Esophagus muscularis mucosa (tissue), 4 donors: ENCODE measurements at regions of chr9 and their contacts with region 1.

Region 1: DNA sequence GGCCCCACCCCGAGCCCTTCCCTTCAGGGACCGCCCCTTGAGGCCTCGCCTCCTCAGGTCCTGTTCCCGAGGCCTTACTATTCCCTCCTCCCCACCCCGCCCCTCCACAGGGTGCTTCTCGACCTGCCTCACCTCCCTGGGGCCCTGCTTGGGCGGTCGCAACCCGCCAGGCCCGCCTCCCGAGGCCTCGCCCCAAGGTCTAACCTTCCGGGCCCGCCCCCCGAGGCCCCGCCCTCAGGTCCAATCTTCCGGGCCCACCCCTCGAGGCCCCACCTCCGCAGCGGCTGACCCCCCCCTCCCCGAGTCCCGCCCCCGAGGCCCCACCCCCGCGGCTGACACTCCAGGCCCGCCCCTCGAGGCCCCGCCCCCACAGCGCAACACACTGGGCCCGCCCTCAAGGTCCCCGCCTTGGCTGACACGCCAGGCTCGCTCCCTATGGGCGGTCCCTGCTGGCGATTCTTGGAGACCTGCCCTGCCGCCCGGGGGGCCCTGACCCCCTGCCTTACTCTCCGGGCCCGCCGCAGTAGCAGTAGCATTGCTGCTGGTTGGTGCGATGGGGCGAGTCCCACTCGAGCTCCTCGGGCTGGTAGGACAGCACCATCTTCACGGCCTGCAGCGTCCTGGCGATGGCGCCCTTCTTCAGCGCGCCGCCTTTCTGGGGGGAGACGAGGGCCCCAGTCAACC is 8.2 kb downstream of the PHF19 start:
- DNase-seq: peak; percentile 99
- H3K4me3 ChIP-seq: peak overlapping the region; percentile 55 to 77 (median 64)
- H3K27ac ChIP-seq: peak overlapping the region; percentile 91 to 93 (median 92)
- H3K4me1 ChIP-seq: peaks cover 6 to 25% (median 21%) of the 10 kb centered on the region in 4 donors
- H3K27me3 ChIP-seq: no peaks in the 10 kb centered on the region
- CTCF ChIP-seq: peak; percentile 48 to 76 (median 65)
- EP300 ChIP-seq: no peak
- POLR2A ChIP-seq: no peak

Region 2: DNA sequence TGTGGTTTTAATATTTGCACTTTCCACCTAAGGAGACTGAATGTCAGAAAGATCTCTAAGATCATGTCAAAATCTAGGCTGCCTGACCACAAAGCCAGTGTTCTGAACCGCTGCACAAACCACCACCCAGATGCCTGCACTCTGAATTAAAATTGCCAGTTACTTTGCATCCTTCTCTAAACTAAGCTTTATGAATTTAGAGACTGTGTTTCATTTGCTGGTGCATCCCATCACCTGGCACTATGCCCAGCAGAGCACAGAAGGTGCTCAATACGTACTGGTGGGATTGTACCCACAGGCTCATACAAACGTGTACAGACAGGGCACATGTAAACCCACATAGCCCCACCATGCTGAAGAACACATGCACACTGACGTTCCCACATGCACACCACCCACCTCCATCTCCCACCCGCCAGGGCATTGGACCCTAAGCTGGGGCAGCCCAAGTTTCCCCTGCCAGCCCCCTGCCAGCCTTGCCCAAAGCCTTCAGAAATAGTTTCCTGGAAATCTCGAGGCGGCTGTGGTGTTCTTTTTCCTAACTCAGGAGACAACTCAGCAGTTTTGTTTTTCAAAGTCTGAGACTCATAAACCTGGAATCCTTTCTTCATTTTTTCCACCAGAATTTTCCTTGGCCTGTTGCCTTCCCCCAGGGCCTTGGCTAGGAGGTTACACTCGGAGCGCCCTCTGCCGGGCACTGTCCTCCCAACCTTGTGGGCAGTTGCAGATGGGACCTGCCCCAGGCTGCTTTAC is 67.4 kb after region 1 on chr9:
- intact Hi-C with region 1: loop called (anchors 2 kb)
- DNase-seq: peak; percentile 99
- H3K4me3 ChIP-seq: peak overlapping the region; percentile 32 to 44 (median 37)
- H3K27ac ChIP-seq: peak overlapping the region; percentile 87 to 91 (median 90)
- H3K4me1 ChIP-seq: peaks cover 40 to 90% (median 76%) of the 10 kb centered on the region in 4 donors
- H3K27me3 ChIP-seq: no peaks in the 10 kb centered on the region
- CTCF ChIP-seq: peak; percentile 91 to 95 (median 95)
- EP300 ChIP-seq: no peak
- POLR2A ChIP-seq: no peak

Region 3: DNA sequence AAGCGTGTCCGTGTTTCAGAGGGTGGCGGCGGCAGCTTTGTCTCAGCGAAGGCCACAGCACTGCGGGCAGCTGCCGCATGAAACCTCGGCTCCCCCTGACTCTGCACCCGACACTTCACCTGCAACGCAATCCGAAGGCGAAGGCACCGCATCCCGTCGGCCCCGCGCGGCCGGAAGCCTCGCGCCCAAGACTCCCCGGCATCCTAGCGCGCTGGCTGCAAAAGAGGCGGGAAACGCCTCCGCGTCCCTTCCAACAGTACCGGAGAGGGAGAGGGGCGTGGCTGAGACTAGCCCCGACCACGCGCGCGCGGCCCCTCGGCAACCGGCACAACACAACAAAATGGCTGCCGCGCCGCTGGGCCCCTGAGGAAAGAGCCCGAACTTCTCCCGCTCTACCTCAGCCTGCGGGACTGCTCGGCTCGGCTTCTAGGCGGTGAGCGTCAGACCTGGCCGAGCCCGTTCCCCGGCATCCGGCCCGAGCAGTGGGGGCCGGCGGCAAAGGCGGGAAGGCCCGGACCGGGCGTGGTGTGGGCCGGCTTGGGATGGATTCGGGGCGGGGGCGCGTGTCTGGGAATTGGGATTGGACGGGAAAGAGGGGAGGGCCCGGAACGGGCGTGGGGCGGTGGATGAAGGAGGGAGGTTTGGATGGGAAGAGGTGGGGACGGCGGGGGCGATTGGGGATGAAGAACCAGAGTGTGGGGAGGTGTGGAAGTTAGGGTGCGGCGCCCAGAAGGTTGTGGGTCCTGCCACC is 206.0 kb after region 1 on chr9 and contains the start of gene CNTRL:
- intact Hi-C with region 1: loop called (anchors 5 kb)
- DNase-seq: peak; percentile 97
- H3K4me3 ChIP-seq: peak within 1 kb of the TSS; percentile 79 to 92 (median 86)
- H3K27ac ChIP-seq: peak within 1 kb of the TSS; percentile 90 to 96 (median 92)
- H3K4me1 ChIP-seq: peaks cover 14 to 33% (median 30%) of the 10 kb centered on the region in 4 donors
- H3K27me3 ChIP-seq: no peaks in the 10 kb centered on the region
- CTCF ChIP-seq: no peak
- EP300 ChIP-seq: peak; percentile 46
- POLR2A ChIP-seq: peak; percentile 21
- total RNA-seq, gene CNTRL: 7.8 to 14.1 (median 11.2) TPM